RWPE1 (cell line): ENCODE measurements at regions of chr1 and their contacts with region 1.

Region 1: GRCh38 chr1:206106328-206107167 is 10.6 kb downstream of the AVPR1B start:
- DNase-seq: peak; percentile 92
- H3K27ac ChIP-seq: no peak overlapping the region
- CTCF ChIP-seq: peak; percentile 86

Region 2: GRCh38 chr1:205983925-205984725 is 122.4 kb before region 1 on chr1:
- CTCF ChIA-PET with region 1: interaction called, 37 read pairs
- POLR2A ChIA-PET with region 1: no interaction called
- DNase-seq: peak; percentile 95
- H3K27ac ChIP-seq: peak overlapping the region; percentile 95
- CTCF ChIP-seq: peak; percentile 70

Region 3: DNA sequence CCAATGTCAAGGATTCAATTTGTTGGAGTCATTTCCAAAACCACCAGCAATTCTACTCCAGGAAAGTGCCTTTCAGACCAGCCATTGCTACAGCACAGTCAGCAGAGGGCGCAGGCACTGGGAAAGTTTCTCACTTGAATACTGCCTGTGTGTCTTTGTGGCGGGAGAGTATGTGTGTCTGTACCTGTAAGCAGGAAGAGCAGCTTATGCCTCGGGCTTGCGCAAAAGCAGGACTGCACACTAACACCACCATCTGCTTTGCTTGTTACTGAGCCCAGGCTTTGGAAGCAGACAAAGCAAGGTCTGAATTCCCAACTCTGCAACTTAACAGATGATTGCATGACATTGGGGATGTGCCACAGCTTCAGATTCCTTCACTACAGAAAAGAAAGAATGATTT is 75.8 kb before region 1 on chr1:
- CTCF ChIA-PET with region 1: interaction called, 21 read pairs
- POLR2A ChIA-PET with region 1: no interaction called
- DNase-seq: peak; percentile 83
- H3K27ac ChIP-seq: peak overlapping the region; percentile 48
- CTCF ChIP-seq: peak; percentile 87